Dendritic cell treated with granulocyte-macrophage colony-stimulating factor and Interleukin-4, amounts not matched to agents 40 ng/mL and 50 ng/mL, for 4 days (primary cell): ENCODE measurements at regions of chr2 and their contacts with region 1.

Region 1: DNA sequence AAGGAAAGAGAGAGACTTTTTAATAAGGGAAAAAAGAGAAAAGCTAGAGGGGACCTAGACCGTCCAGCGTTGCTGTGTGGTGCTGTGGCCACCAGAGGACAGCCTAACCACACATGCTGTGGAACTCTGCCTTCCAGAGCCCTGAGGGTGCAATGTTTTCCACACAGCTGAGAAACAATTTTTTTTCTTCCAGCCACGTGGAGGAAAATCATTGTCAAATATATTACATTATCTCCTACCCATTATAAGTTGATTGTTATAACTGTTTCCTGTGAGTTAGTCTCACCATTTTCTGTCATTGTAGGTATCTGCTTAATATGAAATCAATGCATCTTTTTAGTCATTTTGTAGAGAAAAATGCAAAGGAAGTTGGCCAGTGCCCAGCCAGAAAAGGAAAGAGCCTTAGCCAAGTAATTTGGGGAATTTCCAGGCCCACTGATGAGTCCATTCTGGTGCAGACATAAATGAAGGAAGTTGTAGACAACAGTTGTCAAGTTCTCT is 5.9 kb upstream of the MRPL19 start:
- H3K4me3 Mint-ChIP-seq: no peak overlapping the region
- H3K27ac Mint-ChIP-seq: no peak overlapping the region
- H3K4me1 Mint-ChIP-seq: peaks cover 6% of the 10 kb centered on the region
- H3K27me3 Mint-ChIP-seq: peaks cover 13% of the 10 kb centered on the region

Region 2: DNA sequence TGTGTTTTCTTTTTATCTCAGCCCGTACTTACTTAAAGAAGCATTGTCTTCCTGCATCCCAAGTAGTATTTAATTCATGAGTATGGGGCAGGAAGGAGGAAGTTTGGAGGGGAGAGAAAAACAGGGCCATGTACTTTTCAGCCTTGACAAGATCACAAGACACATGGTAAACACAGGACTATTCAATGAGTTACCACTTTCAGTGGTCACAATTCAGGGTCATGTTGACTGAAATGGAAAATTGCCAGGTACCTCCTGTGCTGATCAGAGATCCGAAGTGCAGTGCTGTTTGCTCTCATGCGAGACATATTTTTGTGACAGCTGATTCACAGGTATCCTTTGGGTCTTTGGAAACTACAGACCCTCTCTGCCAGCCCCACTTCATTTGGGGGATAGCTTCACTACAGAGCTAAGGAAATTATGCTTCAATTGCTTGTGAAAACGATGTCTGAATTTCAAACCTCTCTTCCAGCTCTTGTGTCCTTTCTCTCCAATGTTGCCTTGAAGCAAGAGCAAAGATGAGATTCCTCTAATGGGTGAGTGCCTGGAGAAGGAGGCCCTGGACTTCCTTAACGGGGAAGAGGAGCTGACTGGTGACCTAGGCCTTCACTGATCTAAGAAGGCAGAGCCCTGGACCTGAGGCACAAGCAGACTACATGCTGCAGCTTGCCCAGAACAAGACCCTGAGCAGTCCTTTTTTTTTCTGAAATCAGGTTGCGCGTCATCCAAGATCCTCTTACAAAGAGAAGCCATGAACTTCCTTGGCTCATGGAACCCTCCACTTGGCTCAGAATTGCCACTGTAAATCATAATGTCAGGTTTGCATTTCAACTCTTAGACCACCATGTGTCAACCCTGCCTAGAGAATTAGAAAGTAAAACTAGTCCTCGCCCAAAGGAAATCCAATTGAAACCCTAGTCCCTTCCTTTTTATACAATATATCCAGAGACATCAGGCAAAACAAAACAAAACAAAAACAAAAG is 124.0 kb before region 1 on chr2:
- intact Hi-C with region 1: no loop called
- H3K4me3 Mint-ChIP-seq: no peak overlapping the region
- H3K27ac Mint-ChIP-seq: no peak overlapping the region
- H3K4me1 Mint-ChIP-seq: no peaks in the 10 kb centered on the region
- H3K27me3 Mint-ChIP-seq: no peaks in the 10 kb centered on the region

Region 3: GRCh38 chr2:75676464-75676863 is 35.8 kb after region 1 on chr2:
- intact Hi-C with region 1: loop called (anchors 1 kb)
- H3K4me3 Mint-ChIP-seq: no peak overlapping the region
- H3K27ac Mint-ChIP-seq: no peak overlapping the region
- H3K4me1 Mint-ChIP-seq: peaks cover 13% of the 10 kb centered on the region
- H3K27me3 Mint-ChIP-seq: no peaks in the 10 kb centered on the region